H1 (cell line): ENCODE measurements at regions of chr19 and their contacts with region 1.

Region 1: DNA sequence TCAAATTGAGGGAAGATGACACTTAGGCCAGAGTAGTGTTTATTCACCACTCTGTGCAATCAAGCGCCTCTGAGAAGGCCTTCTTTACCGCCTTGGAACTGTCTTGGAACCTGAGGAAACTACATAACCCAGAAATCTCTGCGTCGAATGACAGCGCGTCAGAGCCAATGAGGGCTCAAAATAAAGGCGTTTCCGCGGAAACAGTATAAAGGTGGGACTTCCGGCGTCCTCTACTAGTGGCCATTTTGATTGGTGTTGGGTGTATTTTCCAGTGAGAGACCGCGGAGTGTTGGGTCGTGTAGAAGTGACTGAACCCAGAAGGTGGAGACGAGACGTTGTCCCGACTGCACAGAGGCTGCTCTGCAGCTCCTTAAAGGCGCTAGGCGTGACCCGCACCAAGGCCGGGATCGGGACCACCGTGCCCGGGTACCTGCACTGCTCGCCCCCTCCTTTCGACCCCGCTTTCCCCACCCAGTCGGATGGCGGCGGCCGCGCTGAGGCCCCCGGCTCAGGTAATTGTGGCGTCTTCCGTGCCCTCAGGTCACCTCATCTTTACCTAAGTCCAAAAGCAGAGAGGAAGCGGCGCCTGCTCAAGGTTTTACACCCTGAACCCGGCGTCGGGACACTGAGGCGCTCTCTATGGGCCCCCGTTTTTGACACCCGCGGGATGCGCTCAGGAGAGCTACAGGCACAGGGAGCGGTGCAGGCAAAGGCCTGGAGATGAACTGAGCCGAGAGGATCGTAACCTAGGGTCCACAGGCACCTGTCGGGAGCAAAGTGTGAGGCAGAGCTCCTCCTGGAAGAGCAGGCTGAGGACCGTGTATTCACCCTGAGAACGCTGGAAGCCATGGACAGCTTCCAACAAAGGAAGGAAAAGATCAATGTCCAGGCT is at the start of gene ZNF776:
- DNase-seq: peak; percentile 43 to 77
- H3K4me3 ChIP-seq: peak within 1 kb of the TSS; percentile 94 to 99 (median 98)
- H3K27ac ChIP-seq: peak within 1 kb of the TSS; percentile 89
- H3K4me1 ChIP-seq: peaks cover 0 to 10% (median 5%) of the 10 kb centered on the region in 4 experiments; a peak in 5 of 7 replicates
- H3K27me3 ChIP-seq: no peaks in the 10 kb centered on the region
- CTCF ChIP-seq: no peak
- EP300 ChIP-seq: no peak
- POLR2A ChIP-seq: peak; percentile 52 to 87
- RAD21 ChIP-seq: no peak
- total RNA-seq, gene ZNF776: 17.3 and 20.5 TPM in 2 replicates

Region 2: DNA sequence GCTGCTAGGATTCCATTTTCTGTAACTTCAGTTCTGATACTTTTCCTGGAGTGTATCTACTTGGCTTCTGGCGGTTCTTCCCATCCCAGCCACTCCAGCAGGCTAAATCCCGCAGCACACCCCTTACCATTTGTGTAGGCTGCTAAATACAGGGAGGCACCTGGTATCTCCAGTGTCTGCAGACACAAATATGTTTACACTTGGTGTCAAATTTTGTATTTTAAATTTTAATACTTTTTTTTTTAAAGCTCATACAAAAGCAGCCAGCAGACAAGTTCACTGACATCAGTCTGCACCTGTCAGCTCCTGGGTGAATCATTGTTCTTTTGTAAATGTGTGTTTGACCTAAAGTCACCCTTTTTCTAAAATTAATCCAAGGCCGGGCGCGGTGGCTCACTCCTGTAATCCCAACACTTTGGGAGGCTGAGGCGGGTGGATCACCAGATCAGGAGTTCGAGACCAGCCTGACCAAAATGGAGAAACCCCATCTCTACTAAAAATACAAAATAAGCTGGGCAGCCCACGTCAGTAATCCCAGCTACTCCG is 81.5 kb before region 1 on chr19:
- CTCF ChIA-PET with region 1: no interaction called
- POLR2A ChIA-PET with region 1: no interaction called
- DNase-seq: no peak
- H3K4me3 ChIP-seq: peak overlapping the region in 2 of 4 experiments; percentile 54 to 72; a peak in 2 of 8 replicates
- H3K27ac ChIP-seq: no peak overlapping the region
- H3K4me1 ChIP-seq: peaks cover 2 to 5% (median 4%) of the 10 kb centered on the region in 4 experiments
- H3K27me3 ChIP-seq: no peaks in the 10 kb centered on the region; a peak in 2 of 7 replicates
- CTCF ChIP-seq: no peak
- EP300 ChIP-seq: no peak
- POLR2A ChIP-seq: no peak
- RAD21 ChIP-seq: no peak

Region 3: DNA sequence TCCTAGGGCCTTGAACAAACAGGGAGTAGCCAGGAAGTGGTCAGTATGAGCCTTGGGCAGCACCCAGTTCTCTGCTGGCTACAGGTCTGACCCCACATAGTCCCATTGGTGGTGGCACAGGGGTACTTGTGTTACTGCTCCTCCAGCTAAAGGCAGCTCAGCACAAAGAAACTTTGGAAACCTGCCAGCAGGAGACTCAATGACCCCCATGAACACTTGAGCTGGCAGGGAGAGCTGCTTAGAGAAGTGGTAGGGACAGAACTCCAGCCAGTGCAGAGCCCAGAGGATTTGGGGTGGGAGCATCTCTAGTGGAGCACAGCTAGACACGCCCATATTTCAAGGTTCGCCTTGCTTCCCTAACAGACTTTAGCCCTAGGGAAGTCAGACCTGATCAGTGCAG is 12.3 kb after region 1 on chr19:
- CTCF ChIA-PET with region 1: interaction called, 3 read pairs
- POLR2A ChIA-PET with region 1: interaction called, 10 read pairs
- DNase-seq: no peak
- H3K4me3 ChIP-seq: no peak overlapping the region
- H3K27ac ChIP-seq: no peak overlapping the region
- H3K4me1 ChIP-seq: no peaks in the 10 kb centered on the region
- H3K27me3 ChIP-seq: no peaks in the 10 kb centered on the region
- CTCF ChIP-seq: no peak
- EP300 ChIP-seq: no peak
- POLR2A ChIP-seq: no peak
- RAD21 ChIP-seq: no peak